GM10248 (cell line): ENCODE measurements at regions of chr17 and their contacts with region 1.

Region 1: DNA sequence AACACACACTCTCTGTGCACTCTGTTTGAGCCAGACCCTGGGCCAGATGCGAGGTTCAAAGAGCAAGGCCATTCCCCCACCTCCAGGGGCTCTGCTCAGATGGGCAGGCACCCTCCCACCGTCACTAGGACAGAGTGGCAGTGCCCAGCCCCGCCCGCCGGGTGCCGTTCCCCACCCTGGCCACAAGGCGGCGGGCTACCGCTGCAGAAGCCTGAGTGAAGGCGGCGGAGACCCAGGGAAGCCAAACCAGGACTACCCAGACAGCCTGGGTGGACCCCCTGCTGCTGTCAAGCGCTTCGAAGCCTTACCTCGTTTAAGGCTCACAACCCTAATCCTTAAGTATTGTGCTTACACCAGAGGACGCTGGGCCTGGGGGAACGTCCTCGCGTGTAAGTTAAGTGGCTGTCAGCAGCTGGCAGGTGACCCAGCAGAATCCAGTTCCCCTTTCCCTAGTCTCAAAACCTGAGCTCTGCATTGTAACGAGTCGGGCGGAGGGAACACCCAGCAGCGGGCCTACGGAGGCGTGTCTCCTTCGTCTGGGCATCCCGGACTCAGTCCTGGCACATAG is 4.5 kb downstream of the ARHGAP27 start:
- DNase-seq: peak; percentile 83
- CTCF ChIP-seq: peak; percentile 96

Region 2: GRCh38 chr17:45394913-45395568 is 33.1 kb before region 1 on chr17:
- CTCF ChIA-PET with region 1: interaction called, 10 read pairs
- POLR2A ChIA-PET with region 1: interaction called, 6 read pairs
- DNase-seq: peak; percentile 75
- CTCF ChIP-seq: peak; percentile 39

Region 3: GRCh38 chr17:45410144-45411091 is 17.7 kb before region 1 on chr17:
- CTCF ChIA-PET with region 1: interaction called, 28 read pairs
- POLR2A ChIA-PET with region 1: no interaction called
- DNase-seq: peak; percentile 84
- CTCF ChIP-seq: no peak